CD8-positive, alpha-beta T cell (primary cell): ENCODE measurements at regions of chr18 and their contacts with region 1.

Region 1: DNA sequence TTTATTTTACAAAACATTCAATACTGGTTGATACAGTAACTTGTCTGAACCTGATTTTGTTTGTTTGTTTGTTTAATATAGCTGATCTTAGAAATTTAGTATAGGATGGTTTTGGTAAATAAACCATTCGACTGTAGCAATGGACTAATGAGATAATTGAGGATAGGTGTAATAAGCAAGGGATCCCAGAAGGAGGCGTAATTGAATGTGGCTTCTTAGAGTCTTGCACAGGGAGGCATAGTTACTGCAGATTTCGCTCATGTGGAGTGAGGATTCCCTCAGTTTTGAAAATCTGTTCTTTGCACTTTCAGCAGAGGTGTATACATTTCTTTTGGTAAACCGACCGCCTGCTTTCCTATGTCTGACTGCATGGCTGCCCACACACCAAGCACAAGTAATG is 709.6 kb downstream of the SOCS6 start:
- DNase-seq: no peak
- ATAC-seq: no peak
- H3K4me3 ChIP-seq: no peak overlapping the region
- H3K4me3 Mint-ChIP-seq: no peak overlapping the region
- H3K27ac ChIP-seq: no peak overlapping the region
- H3K27ac Mint-ChIP-seq: no peak overlapping the region
- H3K4me1 ChIP-seq: no peaks in the 10 kb centered on the region
- H3K4me1 Mint-ChIP-seq: no peaks in the 10 kb centered on the region
- H3K27me3 ChIP-seq: no peaks in the 10 kb centered on the region
- H3K27me3 Mint-ChIP-seq: no peaks in the 10 kb centered on the region
- CTCF ChIP-seq: no peak

Region 2: DNA sequence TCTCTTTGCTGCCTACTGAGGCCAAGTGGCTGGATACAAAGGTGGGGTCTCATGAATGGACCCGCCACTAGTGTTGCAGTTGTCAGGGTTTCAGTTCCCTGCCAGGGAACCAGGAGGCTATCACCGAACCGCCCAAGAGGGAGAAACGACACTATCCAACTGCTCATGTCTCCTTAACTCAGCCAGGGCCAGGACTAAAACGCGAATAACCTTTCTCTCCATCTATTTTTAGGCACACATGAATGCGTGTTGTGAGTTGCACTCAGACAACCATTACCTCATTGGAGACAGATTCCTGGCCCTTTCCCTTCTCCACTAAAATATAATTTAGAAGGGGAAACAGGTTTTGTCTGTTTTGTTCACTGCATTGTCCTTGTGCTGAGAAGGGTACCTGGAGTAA is 150.2 kb before region 1 on chr18:
- CTCF ChIA-PET with region 1: no interaction called
- POLR2A ChIA-PET with region 1: no interaction called
- intact Hi-C with region 1: no loop called
- DNase-seq: no peak
- ATAC-seq: no peak
- H3K4me3 ChIP-seq: no peak overlapping the region
- H3K4me3 Mint-ChIP-seq: no peak overlapping the region
- H3K27ac ChIP-seq: no peak overlapping the region
- H3K27ac Mint-ChIP-seq: no peak overlapping the region
- H3K4me1 ChIP-seq: no peaks in the 10 kb centered on the region
- H3K4me1 Mint-ChIP-seq: peaks cover 3% of the 10 kb centered on the region
- H3K27me3 ChIP-seq: no peaks in the 10 kb centered on the region
- H3K27me3 Mint-ChIP-seq: no peaks in the 10 kb centered on the region
- CTCF ChIP-seq: no peak

Region 3: DNA sequence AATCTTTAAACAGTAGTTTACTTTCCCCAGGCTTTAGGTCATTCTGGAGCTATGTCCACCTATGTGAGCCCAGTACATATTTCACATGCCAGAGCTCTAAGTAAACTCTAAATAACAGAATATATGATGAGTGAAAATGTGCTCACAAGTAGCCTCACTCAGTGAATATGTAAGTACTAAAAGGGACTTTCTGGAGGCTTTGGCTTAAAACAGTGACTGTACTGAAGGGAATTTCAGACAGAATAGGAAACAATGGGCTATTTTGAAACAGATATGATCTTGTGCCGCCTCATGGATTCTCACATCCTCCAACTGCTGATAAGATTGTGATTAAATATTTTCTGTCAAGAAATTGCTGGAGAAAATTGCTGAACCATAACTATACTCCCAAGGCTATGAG is 38.3 kb after region 1 on chr18:
- CTCF ChIA-PET with region 1: no interaction called
- POLR2A ChIA-PET with region 1: no interaction called
- intact Hi-C with region 1: no loop called
- DNase-seq: no peak
- ATAC-seq: no peak
- H3K4me3 ChIP-seq: no peak overlapping the region
- H3K4me3 Mint-ChIP-seq: no peak overlapping the region
- H3K27ac ChIP-seq: no peak overlapping the region
- H3K27ac Mint-ChIP-seq: no peak overlapping the region
- H3K4me1 ChIP-seq: no peaks in the 10 kb centered on the region
- H3K4me1 Mint-ChIP-seq: no peaks in the 10 kb centered on the region
- H3K27me3 ChIP-seq: no peaks in the 10 kb centered on the region
- H3K27me3 Mint-ChIP-seq: no peaks in the 10 kb centered on the region
- CTCF ChIP-seq: no peak

Region 4: DNA sequence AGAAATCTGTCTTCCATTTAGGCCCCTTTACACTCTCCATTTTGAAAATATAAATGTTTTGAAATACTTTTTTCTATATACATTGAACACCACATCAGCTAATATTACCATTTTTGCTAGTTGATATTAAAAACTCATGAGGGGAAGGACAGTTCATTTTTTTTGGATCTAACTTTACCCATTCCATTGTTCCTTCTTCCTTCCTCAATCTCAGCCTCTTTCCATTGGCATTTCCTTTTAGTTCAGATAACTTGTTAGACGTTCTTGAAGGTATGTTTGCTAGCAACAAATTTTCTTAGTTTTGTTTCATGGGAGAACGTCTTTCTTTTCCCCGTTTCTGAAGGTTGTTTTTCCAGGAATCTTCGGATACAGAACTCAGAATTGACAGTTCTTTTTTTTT is 49.4 kb after region 1 on chr18:
- CTCF ChIA-PET with region 1: no interaction called
- POLR2A ChIA-PET with region 1: no interaction called
- intact Hi-C with region 1: no loop called
- DNase-seq: no peak
- ATAC-seq: no peak
- H3K4me3 ChIP-seq: no peak overlapping the region
- H3K4me3 Mint-ChIP-seq: no peak overlapping the region
- H3K27ac ChIP-seq: no peak overlapping the region
- H3K27ac Mint-ChIP-seq: no peak overlapping the region
- H3K4me1 ChIP-seq: no peaks in the 10 kb centered on the region
- H3K4me1 Mint-ChIP-seq: no peaks in the 10 kb centered on the region
- H3K27me3 ChIP-seq: no peaks in the 10 kb centered on the region
- H3K27me3 Mint-ChIP-seq: no peaks in the 10 kb centered on the region
- CTCF ChIP-seq: no peak

Region 5: DNA sequence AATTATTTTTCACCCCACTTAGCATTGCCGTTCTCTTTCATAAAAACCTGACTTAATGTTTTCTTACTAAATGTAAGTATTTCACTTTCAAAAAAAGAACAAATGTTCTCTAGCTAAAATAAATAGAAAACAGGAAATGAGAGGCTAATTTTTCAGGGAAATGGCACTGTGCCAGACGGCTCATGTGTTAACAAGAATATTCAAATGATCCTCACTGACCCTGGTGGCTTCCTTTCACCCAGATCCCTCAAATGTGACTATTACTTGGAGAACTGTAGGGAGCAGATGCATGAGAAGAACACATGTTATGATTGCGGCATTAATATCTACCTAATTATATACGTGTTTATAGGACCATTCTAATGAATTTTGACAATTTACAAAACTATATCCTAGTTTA is 118.0 kb after region 1 on chr18:
- CTCF ChIA-PET with region 1: no interaction called
- POLR2A ChIA-PET with region 1: no interaction called
- intact Hi-C with region 1: no loop called
- DNase-seq: no peak
- ATAC-seq: no peak
- H3K4me3 ChIP-seq: no peak overlapping the region
- H3K4me3 Mint-ChIP-seq: no peak overlapping the region
- H3K27ac ChIP-seq: no peak overlapping the region
- H3K27ac Mint-ChIP-seq: no peak overlapping the region
- H3K4me1 ChIP-seq: no peaks in the 10 kb centered on the region
- H3K4me1 Mint-ChIP-seq: no peaks in the 10 kb centered on the region
- H3K27me3 ChIP-seq: no peaks in the 10 kb centered on the region
- H3K27me3 Mint-ChIP-seq: no peaks in the 10 kb centered on the region
- CTCF ChIP-seq: no peak

Region 6: DNA sequence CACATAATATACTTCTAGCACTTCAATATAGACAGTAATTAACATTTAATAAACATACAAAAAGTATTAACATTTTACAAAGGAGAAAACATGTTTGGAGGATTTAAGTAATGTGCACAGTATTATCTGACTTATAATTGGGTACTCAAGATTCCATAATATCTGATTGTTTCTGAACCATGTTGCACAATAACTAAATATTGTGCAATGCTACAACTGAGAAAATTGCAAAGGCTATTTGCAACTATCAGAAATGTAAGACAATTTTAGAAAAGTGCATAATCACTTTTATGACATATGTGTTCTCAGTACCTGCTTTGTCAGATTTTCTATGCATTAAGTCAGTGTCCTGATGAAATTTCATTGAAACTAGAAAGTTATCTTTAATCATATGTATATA is 225.0 kb after region 1 on chr18:
- CTCF ChIA-PET with region 1: no interaction called
- POLR2A ChIA-PET with region 1: no interaction called
- intact Hi-C with region 1: loop called in 1 of 2 experiments (anchors 10 kb)
- DNase-seq: no peak
- ATAC-seq: no peak
- H3K4me3 ChIP-seq: no peak overlapping the region
- H3K4me3 Mint-ChIP-seq: no peak overlapping the region
- H3K27ac ChIP-seq: no peak overlapping the region
- H3K27ac Mint-ChIP-seq: no peak overlapping the region
- H3K4me1 ChIP-seq: no peaks in the 10 kb centered on the region
- H3K4me1 Mint-ChIP-seq: no peaks in the 10 kb centered on the region
- H3K27me3 ChIP-seq: no peaks in the 10 kb centered on the region
- H3K27me3 Mint-ChIP-seq: no peaks in the 10 kb centered on the region
- CTCF ChIP-seq: no peak